Panc1 (cell line): ENCODE measurements at regions of chr1 and their contacts with region 1.

Region 1: GRCh38 chr1:85628791-85629531 is 48.4 kb downstream of the CCN1 start:
- DNase-seq: peak; percentile 95
- ATAC-seq: peak; percentile 97
- H3K4me3 ChIP-seq: peak overlapping the region; percentile 15 to 45
- H3K27ac ChIP-seq: peak overlapping the region; percentile 96
- H3K4me1 ChIP-seq: peaks cover 31% of the 10 kb centered on the region
- H3K27me3 ChIP-seq: no peaks in the 10 kb centered on the region
- CTCF ChIP-seq: no peak

Region 2: GRCh38 chr1:85607126-85607912 is 21.6 kb before region 1 on chr1:
- CTCF ChIA-PET with region 1: interaction called, 4 read pairs
- POLR2A ChIA-PET with region 1: interaction called, 12 read pairs
- in situ Hi-C with region 1: no loop called
- intact Hi-C with region 1: no loop called
- DNase-seq: peak; percentile 100
- ATAC-seq: peak; percentile 92
- H3K4me3 ChIP-seq: no peak overlapping the region
- H3K27ac ChIP-seq: peak overlapping the region; percentile 98
- H3K4me1 ChIP-seq: peaks cover 47% of the 10 kb centered on the region
- H3K27me3 ChIP-seq: no peaks in the 10 kb centered on the region
- CTCF ChIP-seq: no peak

Region 3: GRCh38 chr1:85850238-85850637 is 221.3 kb after region 1 on chr1:
- CTCF ChIA-PET with region 1: no interaction called
- POLR2A ChIA-PET with region 1: no interaction called
- in situ Hi-C with region 1: no loop called
- intact Hi-C with region 1: no loop called
- DNase-seq: peak; percentile 91
- ATAC-seq: peak; percentile 96
- H3K4me3 ChIP-seq: no peak overlapping the region
- H3K27ac ChIP-seq: peak overlapping the region; percentile 70; the same call in 1 of the 2 replicates
- H3K4me1 ChIP-seq: peaks cover 24% of the 10 kb centered on the region
- H3K27me3 ChIP-seq: no peaks in the 10 kb centered on the region
- CTCF ChIP-seq: peak; percentile 73; the same call in 1 of the 2 replicates